BJ (cell line): ENCODE measurements at regions of chr3 and their contacts with region 1.

Region 1: DNA sequence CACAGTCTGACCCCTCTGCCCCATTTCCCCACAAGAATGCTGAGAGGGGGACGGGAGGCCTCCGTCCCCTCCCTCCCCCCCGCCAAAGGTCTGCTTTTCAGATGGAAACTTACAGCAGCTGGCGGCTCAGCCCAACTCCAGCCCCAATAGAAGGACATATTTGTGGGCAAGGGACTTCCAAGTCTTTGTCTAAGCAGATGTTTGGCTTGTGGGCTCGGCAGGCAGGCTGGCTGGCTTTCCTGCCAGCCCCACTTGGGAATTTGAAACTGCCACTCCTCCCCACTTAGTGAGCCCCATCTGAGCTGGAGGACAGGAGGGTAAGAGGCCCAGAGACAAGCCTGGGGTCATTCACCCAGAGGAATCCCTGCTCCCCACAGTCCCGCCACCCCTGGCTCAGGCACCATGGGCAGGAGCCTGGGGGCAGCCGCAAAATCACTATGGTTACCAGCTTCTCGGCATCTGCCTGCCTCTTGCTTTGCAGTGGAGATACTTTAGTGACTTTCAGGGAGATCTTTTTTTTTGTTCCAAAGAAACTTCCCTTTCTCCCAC is 53.6 kb downstream of the LMCD1 start:
- DNase-seq: peak; percentile 95
- H3K4me3 ChIP-seq: no peak overlapping the region
- H3K27me3 ChIP-seq: no peaks in the 10 kb centered on the region
- CTCF ChIP-seq: no peak

Region 2: GRCh38 chr3:8524249-8524648 is 30.9 kb before region 1 on chr3:
- CTCF ChIA-PET with region 1: no interaction called
- POLR2A ChIA-PET with region 1: interaction called, 20 read pairs
- DNase-seq: no peak
- H3K4me3 ChIP-seq: no peak overlapping the region
- H3K27me3 ChIP-seq: no peaks in the 10 kb centered on the region
- CTCF ChIP-seq: no peak

Region 3: DNA sequence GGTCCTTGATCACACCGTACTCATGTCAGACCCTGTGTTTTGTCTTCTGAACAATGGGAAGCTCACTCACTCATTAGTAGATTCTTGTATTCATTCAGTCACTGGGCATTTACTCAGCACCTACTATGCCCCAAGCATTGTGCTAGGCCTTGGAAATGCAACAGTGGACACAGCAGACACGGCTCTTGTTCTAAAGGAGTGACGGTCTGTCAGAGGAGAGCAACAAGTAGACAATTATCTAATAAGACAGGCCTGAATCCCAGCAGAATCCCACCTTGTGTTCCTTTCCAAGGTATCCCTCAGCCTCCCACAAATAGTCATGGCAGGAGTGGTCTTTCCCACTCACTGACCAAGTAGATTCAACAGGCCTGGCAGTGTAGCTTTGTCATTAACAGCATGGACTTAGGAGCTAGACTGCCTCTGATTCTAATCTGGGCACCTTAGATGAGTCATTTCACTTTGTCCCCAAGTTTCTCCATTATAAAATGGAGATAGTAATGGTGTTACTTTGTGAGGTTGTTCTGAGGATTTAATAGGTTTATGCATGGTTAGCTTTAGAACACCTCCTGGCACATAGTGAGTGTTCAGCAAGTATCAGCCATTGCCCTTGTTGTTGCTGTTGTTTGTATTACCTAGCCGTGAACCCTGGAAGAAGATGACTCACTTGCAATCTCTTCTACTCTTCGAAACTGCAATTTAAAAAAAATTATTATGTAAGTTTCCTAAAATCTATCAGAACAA is 20.3 kb after region 1 on chr3:
- CTCF ChIA-PET with region 1: interaction called, 14 read pairs
- POLR2A ChIA-PET with region 1: interaction called, 4 read pairs
- DNase-seq: peak; percentile 1
- H3K4me3 ChIP-seq: no peak overlapping the region
- H3K27me3 ChIP-seq: no peaks in the 10 kb centered on the region
- CTCF ChIP-seq: no peak